HepG2 (cell line): ENCODE measurements at regions of chr18 and their contacts with region 1.

Region 1: GRCh38 chr18:9136315-9137155 is at the start of gene ANKRD12:
- DNase-seq: peak; percentile 88
- ATAC-seq: peak; percentile 86
- H3K4me3 ChIP-seq: peak within 1 kb of the TSS; percentile 85 to 94 (median 93)
- H3K27ac ChIP-seq: peak within 1 kb of the TSS; percentile 97
- H3K4me1 ChIP-seq: peaks cover 54% of the 10 kb centered on the region
- H3K27me3 ChIP-seq: no peaks in the 10 kb centered on the region; a peak in 2 of 5 replicates
- CTCF ChIP-seq: no peak
- EP300 ChIP-seq: no peak
- POLR2A ChIP-seq: peak; percentile 71 to 75
- RAD21 ChIP-seq: no peak
- total RNA-seq, gene ANKRD12: 16.8 and 23.2 TPM in 2 replicates

Region 2: GRCh38 chr18:9066817-9067306 is 69.7 kb before region 1 on chr18:
- CTCF ChIA-PET with region 1: no interaction called
- POLR2A ChIA-PET with region 1: no interaction called
- in situ Hi-C with region 1: no loop called
- intact Hi-C with region 1: loop called (anchors 2 kb)
- DNase-seq: no peak
- ATAC-seq: no peak
- H3K4me3 ChIP-seq: no peak overlapping the region
- H3K27ac ChIP-seq: no peak overlapping the region
- H3K4me1 ChIP-seq: peaks cover 32% of the 10 kb centered on the region
- H3K27me3 ChIP-seq: no peaks in the 10 kb centered on the region; a peak in 1 of 5 replicates
- CTCF ChIP-seq: no peak
- EP300 ChIP-seq: no peak
- POLR2A ChIP-seq: no peak
- RAD21 ChIP-seq: no peak

Region 3: DNA sequence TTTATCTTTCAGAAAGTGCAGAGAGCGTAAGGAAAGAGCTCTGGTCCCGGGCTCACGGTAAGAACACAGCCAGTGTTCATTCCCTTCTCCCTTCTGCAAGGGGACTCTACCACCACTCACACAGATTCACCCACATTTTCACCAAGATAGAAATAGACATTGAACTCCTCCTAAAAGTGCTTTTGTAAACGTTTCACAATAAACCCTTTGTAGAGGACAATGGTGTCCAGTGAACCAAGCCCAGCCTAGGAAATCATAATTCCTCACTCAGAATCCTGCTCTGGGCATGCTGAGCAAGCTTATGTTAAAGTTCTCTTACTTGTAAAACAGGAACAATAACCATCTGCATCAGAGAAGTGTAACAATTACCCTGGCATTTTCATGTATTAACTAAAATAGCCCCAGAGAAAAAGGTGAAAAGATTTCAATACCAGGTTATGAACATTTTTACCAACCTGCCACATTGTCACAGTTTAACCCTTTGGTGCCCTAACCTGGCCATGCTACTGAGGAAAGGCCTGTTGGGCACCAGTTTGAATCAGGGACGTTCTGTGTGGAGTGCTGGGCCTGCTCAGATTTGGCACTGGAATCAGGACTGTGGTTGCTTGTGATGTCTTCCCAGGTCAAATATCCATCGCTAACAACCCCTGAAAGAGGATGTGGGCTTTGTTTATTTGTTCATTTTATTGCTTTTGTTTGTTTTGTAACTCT is 56.6 kb before region 1 on chr18:
- CTCF ChIA-PET with region 1: no interaction called
- POLR2A ChIA-PET with region 1: interaction called, 7 read pairs
- in situ Hi-C with region 1: loop called (anchors 5 kb)
- intact Hi-C with region 1: no loop called
- DNase-seq: peak; percentile 74
- ATAC-seq: peak; percentile 88
- H3K4me3 ChIP-seq: peak overlapping the region; percentile 26 to 48 (median 41); a peak in 5 of 6 replicates
- H3K27ac ChIP-seq: peak overlapping the region; percentile 39
- H3K4me1 ChIP-seq: peaks cover 41% of the 10 kb centered on the region
- H3K27me3 ChIP-seq: no peaks in the 10 kb centered on the region
- CTCF ChIP-seq: no peak
- EP300 ChIP-seq: no peak
- POLR2A ChIP-seq: no peak
- RAD21 ChIP-seq: no peak

Region 4: DNA sequence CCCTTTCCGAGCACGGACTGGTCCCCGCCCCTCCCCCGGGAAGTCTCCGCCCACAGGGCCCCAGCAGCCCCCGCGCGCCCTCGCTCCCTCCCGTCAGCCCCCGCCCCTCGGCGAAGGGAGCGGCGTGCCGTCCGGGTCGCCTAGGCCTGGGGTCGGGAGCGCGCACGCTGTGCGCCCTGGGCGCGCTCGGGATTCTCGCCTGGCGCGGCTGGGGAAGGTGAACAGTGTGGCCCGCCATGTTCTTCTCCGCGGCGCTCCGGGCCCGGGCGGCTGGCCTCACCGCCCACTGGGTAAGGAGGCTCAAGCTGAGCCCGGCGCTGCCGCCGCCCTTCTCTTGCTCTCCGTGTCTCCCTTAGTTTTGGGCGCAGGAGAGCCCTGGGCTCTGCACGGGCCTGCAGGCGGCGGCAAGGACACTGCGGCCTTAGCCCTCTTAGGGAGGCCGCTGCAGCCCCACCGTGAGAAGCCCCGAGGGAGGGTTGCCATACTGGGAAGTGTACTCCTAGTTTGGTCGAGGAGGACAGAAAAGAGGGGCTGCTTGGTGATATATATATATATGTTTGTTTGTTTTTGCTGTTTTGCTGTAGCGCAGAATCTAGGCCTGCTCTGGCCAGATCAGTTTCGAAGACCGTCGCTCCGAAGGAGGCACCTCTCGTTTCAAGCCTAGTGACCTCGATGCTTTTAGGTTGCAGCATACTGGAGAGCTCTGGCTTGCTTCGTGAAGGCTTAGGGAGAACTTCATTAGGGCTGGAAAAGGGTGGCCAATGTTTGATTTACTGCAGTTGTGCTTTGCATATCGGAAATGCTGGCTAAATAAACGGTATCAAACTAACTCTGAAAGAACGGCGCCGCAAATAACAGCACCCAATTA is 33.8 kb before region 1 on chr18 and contains the start of gene NDUFV2:
- CTCF ChIA-PET with region 1: no interaction called
- POLR2A ChIA-PET with region 1: interaction called, 71 read pairs
- in situ Hi-C with region 1: no loop called
- intact Hi-C with region 1: loop called (anchors 5 kb)
- DNase-seq: peak; percentile 87
- ATAC-seq: peak; percentile 97
- H3K4me3 ChIP-seq: peak within 1 kb of the TSS; percentile 68 to 89 (median 78)
- H3K27ac ChIP-seq: peak within 1 kb of the TSS; percentile 92
- H3K4me1 ChIP-seq: peaks cover 49% of the 10 kb centered on the region
- H3K27me3 ChIP-seq: no peaks in the 10 kb centered on the region; a peak in 1 of 5 replicates
- CTCF ChIP-seq: no peak
- EP300 ChIP-seq: peak in 1 of 2 experiments; percentile 23; a peak in 1 of 4 replicates
- POLR2A ChIP-seq: peak; percentile 69 to 77
- RAD21 ChIP-seq: peak; percentile 51; the same call in 1 of the 2 replicates
- total RNA-seq, gene NDUFV2: 299 and 369 TPM in 2 replicates

Region 5: GRCh38 chr18:9109523-9109922 is 27.0 kb before region 1 on chr18:
- CTCF ChIA-PET with region 1: no interaction called
- POLR2A ChIA-PET with region 1: interaction called, 71 read pairs
- in situ Hi-C with region 1: no loop called
- intact Hi-C with region 1: loop called (anchors 5 kb)
- DNase-seq: no peak
- ATAC-seq: no peak
- H3K4me3 ChIP-seq: no peak overlapping the region
- H3K27ac ChIP-seq: peak overlapping the region; percentile 1
- H3K4me1 ChIP-seq: peaks cover 87% of the 10 kb centered on the region
- H3K27me3 ChIP-seq: no peaks in the 10 kb centered on the region
- CTCF ChIP-seq: no peak
- EP300 ChIP-seq: no peak
- POLR2A ChIP-seq: no peak
- RAD21 ChIP-seq: no peak